Calu3 (cell line): ENCODE measurements at regions of chr17 and their contacts with region 1.

Region 1: DNA sequence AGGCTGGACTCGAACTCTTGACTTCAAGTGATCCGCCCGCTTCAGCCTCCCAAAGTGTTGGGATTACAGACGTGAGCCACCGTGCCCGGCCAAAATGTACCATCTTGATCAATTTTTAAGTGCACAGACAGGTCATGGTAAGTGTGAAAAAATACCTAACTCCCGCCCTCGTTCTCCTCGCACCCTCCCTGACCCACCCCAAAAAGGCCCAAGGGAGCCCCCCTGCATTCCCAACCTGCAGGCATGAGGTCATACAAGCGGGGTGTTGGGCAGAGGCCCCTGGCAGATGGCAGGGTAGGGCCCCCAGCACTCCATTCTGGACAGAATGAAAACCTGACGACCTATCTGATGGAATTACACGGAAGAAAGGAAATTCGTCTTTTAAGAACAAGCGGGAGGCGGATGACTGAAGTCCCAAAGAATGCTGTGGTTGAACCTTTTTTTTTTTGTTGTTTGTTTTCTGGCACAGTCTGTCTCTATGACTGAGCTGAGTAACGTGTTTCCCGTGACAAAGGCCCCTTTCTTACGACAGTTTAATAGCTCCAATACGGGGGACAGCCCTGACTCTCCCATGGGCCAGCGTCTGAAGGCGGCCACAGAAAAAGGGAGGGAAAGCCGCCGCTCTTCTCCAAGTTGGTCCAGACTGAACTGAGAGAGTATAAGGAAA is 376.4 kb downstream of the SLC39A11 start:
- DNase-seq: peak; percentile 84
- H3K4me3 Mint-ChIP-seq: peak overlapping the region; percentile 56
- H3K27ac Mint-ChIP-seq: peak overlapping the region; percentile 99
- H3K4me1 Mint-ChIP-seq: peaks cover 60% of the 10 kb centered on the region
- H3K27me3 Mint-ChIP-seq: no peaks in the 10 kb centered on the region
- CTCF ChIP-seq: no peak

Region 2: GRCh38 chr17:72407336-72407909 is 308.6 kb before region 1 on chr17:
- CTCF ChIA-PET with region 1: no interaction called
- intact Hi-C with region 1: loop called (anchors 5 kb)
- DNase-seq: peak; percentile 90
- H3K4me3 Mint-ChIP-seq: peak overlapping the region; percentile 65
- H3K27ac Mint-ChIP-seq: peak overlapping the region; percentile 99
- H3K4me1 Mint-ChIP-seq: peaks cover 92% of the 10 kb centered on the region
- H3K27me3 Mint-ChIP-seq: no peaks in the 10 kb centered on the region
- CTCF ChIP-seq: no peak

Region 3: DNA sequence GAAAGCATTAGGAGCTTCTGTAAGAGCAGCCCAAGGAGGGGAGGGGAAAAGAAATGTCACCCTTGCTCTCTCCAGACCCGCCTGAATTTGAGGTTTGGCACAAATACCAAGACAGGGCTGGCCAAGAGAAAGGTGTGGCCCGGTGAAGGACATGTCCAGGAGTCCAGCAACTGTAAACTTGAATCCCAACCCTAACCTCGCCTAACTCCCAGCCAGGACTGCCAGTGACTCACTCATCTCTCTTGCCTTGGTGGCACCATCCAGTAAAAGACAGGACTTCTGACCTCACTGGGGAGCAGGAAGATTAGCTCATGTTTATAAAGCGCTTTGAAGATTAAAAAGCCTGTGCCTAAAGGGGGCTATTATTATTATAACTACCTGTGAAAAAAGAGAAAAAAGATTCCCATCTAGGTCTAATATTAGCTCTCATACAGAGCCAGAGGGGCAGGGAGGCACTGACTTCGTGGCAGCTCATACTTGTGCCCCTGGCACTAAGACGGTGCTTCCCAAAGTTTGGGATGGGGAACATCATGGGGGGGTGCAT is 259.9 kb before region 1 on chr17:
- CTCF ChIA-PET with region 1: no interaction called
- intact Hi-C with region 1: loop called (anchors 1 kb)
- DNase-seq: peak; percentile 79
- H3K4me3 Mint-ChIP-seq: peak overlapping the region; percentile 18
- H3K27ac Mint-ChIP-seq: no peak overlapping the region
- H3K4me1 Mint-ChIP-seq: peaks cover 77% of the 10 kb centered on the region
- H3K27me3 Mint-ChIP-seq: no peaks in the 10 kb centered on the region
- CTCF ChIP-seq: no peak

Region 4: DNA sequence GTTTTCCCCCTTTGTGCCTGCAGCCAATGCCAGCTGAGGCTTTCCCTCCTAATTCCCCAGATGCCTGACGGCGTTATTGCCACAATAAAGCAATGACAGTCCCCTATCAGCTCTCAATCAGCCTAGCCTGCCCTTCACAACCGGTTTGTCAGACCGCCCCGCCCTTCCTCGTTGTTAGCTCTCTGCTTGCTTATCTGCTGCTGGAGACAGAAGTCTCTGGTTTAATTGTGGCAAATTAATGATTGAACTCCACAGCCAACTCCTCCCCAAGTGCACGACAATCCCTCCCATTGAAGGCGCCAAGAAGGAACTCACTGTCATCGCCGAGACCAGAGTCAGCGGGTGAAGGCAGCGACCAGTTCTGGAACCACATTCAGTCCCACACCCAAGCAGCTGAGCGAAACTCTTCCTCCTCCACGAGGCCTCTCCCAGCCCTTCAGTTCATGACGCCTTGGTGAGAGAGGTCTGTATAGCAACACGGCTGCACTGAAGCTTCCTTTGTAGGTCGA is 98.0 kb before region 1 on chr17:
- CTCF ChIA-PET with region 1: interaction called, 16 read pairs
- intact Hi-C with region 1: loop called (anchors 1 kb)
- DNase-seq: peak; percentile 94
- H3K4me3 Mint-ChIP-seq: peak overlapping the region; percentile 61
- H3K27ac Mint-ChIP-seq: peak overlapping the region; percentile 98
- H3K4me1 Mint-ChIP-seq: peaks cover 72% of the 10 kb centered on the region
- H3K27me3 Mint-ChIP-seq: no peaks in the 10 kb centered on the region
- CTCF ChIP-seq: no peak